T-cell (primary cell): ENCODE measurements at regions of chr4 and their contacts with region 1.

Region 1: DNA sequence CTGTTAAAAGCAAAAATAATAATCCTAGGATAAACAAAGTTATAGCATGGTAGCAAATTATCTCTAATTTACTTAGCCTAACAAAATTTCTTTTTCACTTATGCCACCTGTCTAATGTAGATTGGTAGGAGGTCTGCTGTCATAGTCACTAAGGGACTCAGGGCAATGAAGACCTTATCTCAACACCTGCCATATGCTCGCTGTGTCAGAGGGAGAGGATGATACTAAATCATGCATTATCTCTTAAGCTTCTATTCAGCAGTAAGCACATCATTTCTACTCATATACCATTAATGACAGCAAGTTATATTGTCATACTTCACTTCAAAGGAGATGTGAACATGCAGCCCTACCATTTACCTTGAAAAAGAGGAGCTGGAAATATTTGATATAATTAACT is 44.1 kb downstream of the AFM start:
- DNase-seq: no peak
- ATAC-seq: no peak
- H3K4me3 ChIP-seq: no peak overlapping the region
- H3K4me3 Mint-ChIP-seq: no peak overlapping the region
- H3K27ac ChIP-seq: no peak overlapping the region
- H3K27ac Mint-ChIP-seq: no peak overlapping the region
- H3K4me1 ChIP-seq: no peaks in the 10 kb centered on the region
- H3K4me1 Mint-ChIP-seq: no peaks in the 10 kb centered on the region
- H3K27me3 ChIP-seq: no peaks in the 10 kb centered on the region
- H3K27me3 Mint-ChIP-seq: peaks cover 0 to 2% of the 10 kb centered on the region in 2 donors

Region 2: GRCh38 chr4:71689822-71690221 is 1835.8 kb before region 1 on chr4:
- CTCF ChIA-PET with region 1: interaction called in 1 of 2 experiments, 13 read pairs
- POLR2A ChIA-PET with region 1: no interaction called
- DNase-seq: no peak
- ATAC-seq: no peak
- H3K4me3 ChIP-seq: no peak overlapping the region
- H3K4me3 Mint-ChIP-seq: no peak overlapping the region
- H3K27ac ChIP-seq: no peak overlapping the region
- H3K27ac Mint-ChIP-seq: no peak overlapping the region
- H3K4me1 ChIP-seq: no peaks in the 10 kb centered on the region
- H3K4me1 Mint-ChIP-seq: no peaks in the 10 kb centered on the region
- H3K27me3 ChIP-seq: no peaks in the 10 kb centered on the region
- H3K27me3 Mint-ChIP-seq: peaks cover 20 to 25% of the 10 kb centered on the region in 2 donors

Region 3: DNA sequence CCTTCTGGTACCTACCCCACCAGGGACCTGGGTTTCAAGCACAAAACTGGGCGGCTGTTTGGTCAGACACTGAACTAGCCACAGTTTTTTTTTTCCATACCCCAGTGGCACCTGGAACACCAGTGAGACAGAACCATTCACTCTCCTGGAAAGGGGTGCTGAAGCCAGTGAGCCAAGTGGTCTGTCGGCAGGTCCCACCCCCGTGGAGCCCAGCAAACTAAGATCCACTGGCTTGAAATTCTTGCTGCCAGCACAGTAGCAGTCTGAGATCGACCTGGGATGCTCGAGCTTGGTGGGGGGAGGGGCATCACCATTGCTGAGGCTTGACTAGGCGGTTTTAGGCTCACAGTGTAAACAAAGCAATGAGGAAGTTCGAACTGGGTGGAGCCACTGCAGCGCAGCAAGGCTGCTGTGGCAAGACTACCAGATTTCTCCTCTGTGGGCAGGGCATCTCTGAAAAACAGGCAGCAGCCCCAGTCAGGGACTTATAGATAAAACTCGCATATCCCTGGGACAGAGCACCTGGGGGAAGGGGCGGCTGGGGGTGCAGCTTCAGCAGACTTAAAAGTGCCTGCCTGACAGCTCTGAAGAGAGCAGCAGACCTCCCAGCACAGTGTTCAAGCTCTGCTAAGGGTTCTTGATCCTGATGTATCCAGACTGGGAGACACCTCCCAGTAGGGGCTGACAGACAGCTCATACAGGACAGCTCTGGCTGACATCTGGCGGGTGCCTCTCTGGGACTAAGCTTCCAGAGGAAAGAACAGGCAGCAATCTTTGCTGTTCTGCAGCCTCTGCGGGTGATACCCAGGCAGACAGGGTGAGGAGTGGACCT is 679.1 kb before region 1 on chr4:
- CTCF ChIA-PET with region 1: no interaction called
- POLR2A ChIA-PET with region 1: no interaction called
- DNase-seq: no peak
- ATAC-seq: no peak
- H3K4me3 ChIP-seq: no peak overlapping the region
- H3K4me3 Mint-ChIP-seq: no peak overlapping the region
- H3K27ac ChIP-seq: no peak overlapping the region
- H3K27ac Mint-ChIP-seq: no peak overlapping the region
- H3K4me1 ChIP-seq: no peaks in the 10 kb centered on the region
- H3K4me1 Mint-ChIP-seq: no peaks in the 10 kb centered on the region
- H3K27me3 ChIP-seq: peaks cover 0 to 16% of the 10 kb centered on the region in 2 experiments
- H3K27me3 Mint-ChIP-seq: peaks cover 15 to 17% of the 10 kb centered on the region in 2 donors

Region 4: GRCh38 chr4:73103799-73104503 is 421.7 kb before region 1 on chr4:
- CTCF ChIA-PET with region 1: no interaction called
- POLR2A ChIA-PET with region 1: no interaction called
- DNase-seq: no peak
- ATAC-seq: no peak
- H3K4me3 ChIP-seq: no peak overlapping the region
- H3K4me3 Mint-ChIP-seq: no peak overlapping the region
- H3K27ac ChIP-seq: no peak overlapping the region
- H3K27ac Mint-ChIP-seq: peak overlapping the region in 1 of 2 donors; percentile 1
- H3K4me1 ChIP-seq: no peaks in the 10 kb centered on the region
- H3K4me1 Mint-ChIP-seq: no peaks in the 10 kb centered on the region
- H3K27me3 ChIP-seq: no peaks in the 10 kb centered on the region
- H3K27me3 Mint-ChIP-seq: no peaks in the 10 kb centered on the region